T-cell (primary cell): ENCODE measurements at regions of chr10 and their contacts with region 1.

Region 1: GRCh38 chr10:11165591-11166543 is 148.2 kb downstream of the CELF2 start:
- DNase-seq: peak; percentile 47 to 88 (median 73)
- ATAC-seq: peak; percentile 49 to 64 (median 57)
- H3K4me3 ChIP-seq: peak overlapping the region; percentile 86 to 96
- H3K4me3 Mint-ChIP-seq: no peak overlapping the region
- H3K27ac ChIP-seq: peak overlapping the region; percentile 94
- H3K27ac Mint-ChIP-seq: peak overlapping the region; percentile 97 to 98
- H3K4me1 ChIP-seq: peaks cover 45 to 48% of the 10 kb centered on the region in 2 experiments
- H3K4me1 Mint-ChIP-seq: peaks cover 38 to 44% (median 43%) of the 10 kb centered on the region in 3 donors
- H3K27me3 ChIP-seq: no peaks in the 10 kb centered on the region
- H3K27me3 Mint-ChIP-seq: no peaks in the 10 kb centered on the region

Region 2: GRCh38 chr10:11145495-11145855 is 20.4 kb before region 1 on chr10:
- CTCF ChIA-PET with region 1: interaction called, 4 to 95 read pairs
- POLR2A ChIA-PET with region 1: interaction called, 57 to 417 read pairs
- DNase-seq: peak in 34 of 35 experiments; percentile 54 to 86 (median 72)
- ATAC-seq: peak; percentile 74 to 86 (median 82)
- H3K4me3 ChIP-seq: peak overlapping the region in 1 of 2 donors; percentile 54
- H3K4me3 Mint-ChIP-seq: peak overlapping the region; percentile 59 to 75 (median 71)
- H3K27ac ChIP-seq: peak overlapping the region; percentile 96
- H3K27ac Mint-ChIP-seq: peak overlapping the region; percentile 96 to 98
- H3K4me1 ChIP-seq: peaks cover 91 to 93% of the 10 kb centered on the region in 2 experiments
- H3K4me1 Mint-ChIP-seq: peaks cover 98 to 100% (median 98%) of the 10 kb centered on the region in 3 donors
- H3K27me3 ChIP-seq: no peaks in the 10 kb centered on the region
- H3K27me3 Mint-ChIP-seq: no peaks in the 10 kb centered on the region

Region 3: DNA sequence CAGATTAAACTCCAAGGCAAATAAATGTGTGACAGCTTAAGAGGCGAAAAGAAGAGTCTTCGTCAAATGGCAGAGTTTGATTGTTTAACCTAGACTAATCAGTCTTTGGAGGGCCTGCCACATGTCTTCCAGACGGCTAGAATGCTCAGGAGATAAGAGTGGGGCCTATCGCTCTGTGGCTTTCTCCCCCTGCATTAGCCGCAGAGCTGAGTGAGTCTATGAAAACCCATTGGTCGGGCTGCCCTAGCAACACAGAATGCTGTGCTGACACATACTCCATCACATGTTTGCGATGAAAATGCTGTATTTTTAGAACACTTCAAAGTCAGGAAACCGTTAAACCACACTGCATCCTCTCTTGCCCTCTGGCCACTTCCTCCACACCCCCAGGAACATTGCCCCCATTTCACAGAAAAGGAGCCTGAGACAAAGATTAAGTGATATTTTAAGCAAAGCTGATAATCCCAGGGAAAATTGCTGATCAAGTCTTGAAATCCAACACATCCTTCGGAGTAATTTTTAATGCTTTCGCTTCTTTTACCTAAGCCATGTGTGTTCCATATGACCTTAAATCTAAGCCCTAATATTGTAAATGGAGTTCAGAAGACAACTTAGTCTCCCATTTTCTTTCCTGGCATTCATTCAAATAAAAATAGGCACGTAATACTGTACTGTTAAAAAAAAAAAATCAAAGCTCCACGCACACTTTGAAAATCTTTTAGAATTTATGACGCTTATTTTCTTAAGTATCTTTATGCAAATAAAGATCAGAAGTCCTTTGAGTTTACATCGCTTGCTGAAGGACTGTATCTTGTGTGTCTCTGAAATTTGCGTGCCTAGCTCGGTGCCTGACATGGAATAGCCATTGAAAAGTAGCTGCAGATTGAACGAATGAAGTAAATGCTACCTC is 13.0 kb after region 1 on chr10:
- CTCF ChIA-PET with region 1: interaction called in 1 of 2 experiments, 38 read pairs
- POLR2A ChIA-PET with region 1: interaction called, 24 to 90 read pairs
- DNase-seq: peak; percentile 52 to 92 (median 81)
- ATAC-seq: peak; percentile 86 to 89 (median 88)
- H3K4me3 ChIP-seq: peak overlapping the region; percentile 31 to 58
- H3K4me3 Mint-ChIP-seq: peak overlapping the region in 1 of 3 donors; percentile 71
- H3K27ac ChIP-seq: peak overlapping the region; percentile 94
- H3K27ac Mint-ChIP-seq: peak overlapping the region in 1 of 2 donors; percentile 94
- H3K4me1 ChIP-seq: peaks cover 78 to 84% of the 10 kb centered on the region in 2 experiments
- H3K4me1 Mint-ChIP-seq: peaks cover 30 to 31% (median 31%) of the 10 kb centered on the region in 3 donors
- H3K27me3 ChIP-seq: no peaks in the 10 kb centered on the region
- H3K27me3 Mint-ChIP-seq: no peaks in the 10 kb centered on the region

Region 4: DNA sequence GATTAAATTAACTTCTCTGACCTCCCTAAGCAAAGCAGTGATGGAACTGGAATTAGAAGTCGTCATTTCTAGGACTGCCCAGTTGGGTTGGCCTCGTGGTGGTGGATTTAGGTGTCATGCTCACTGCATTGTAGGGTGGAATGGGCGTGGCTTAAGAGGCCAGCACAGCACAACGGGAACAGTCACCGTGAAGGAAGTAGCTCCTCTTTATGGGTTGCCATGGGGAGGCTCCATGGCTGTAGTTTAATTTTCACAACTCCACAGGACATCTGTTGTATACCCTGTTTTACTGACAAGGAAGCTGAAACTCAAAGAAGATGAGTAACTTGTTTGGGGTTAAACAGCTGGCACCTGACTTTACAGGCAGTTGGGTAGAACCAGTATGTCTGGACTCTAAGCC is 60.1 kb after region 1 on chr10:
- CTCF ChIA-PET with region 1: interaction called in 1 of 2 experiments, 5 read pairs
- POLR2A ChIA-PET with region 1: interaction called, 3 to 10 read pairs
- DNase-seq: peak in 33 of 35 experiments; percentile 29 to 77 (median 46)
- ATAC-seq: peak; percentile 51 to 61 (median 57)
- H3K4me3 ChIP-seq: peak overlapping the region in 1 of 2 donors; percentile 12
- H3K4me3 Mint-ChIP-seq: peak overlapping the region in 2 of 3 donors; percentile 25 to 67
- H3K27ac ChIP-seq: peak overlapping the region; percentile 82
- H3K27ac Mint-ChIP-seq: peak overlapping the region; percentile 88 to 92
- H3K4me1 ChIP-seq: peaks cover 43 to 73% of the 10 kb centered on the region in 2 experiments
- H3K4me1 Mint-ChIP-seq: peaks cover 96 to 98% (median 97%) of the 10 kb centered on the region in 3 donors
- H3K27me3 ChIP-seq: no peaks in the 10 kb centered on the region
- H3K27me3 Mint-ChIP-seq: no peaks in the 10 kb centered on the region